CD4-positive, alpha-beta T cell (primary cell): ENCODE measurements at regions of chr14 and their contacts with region 1.

Region 1: DNA sequence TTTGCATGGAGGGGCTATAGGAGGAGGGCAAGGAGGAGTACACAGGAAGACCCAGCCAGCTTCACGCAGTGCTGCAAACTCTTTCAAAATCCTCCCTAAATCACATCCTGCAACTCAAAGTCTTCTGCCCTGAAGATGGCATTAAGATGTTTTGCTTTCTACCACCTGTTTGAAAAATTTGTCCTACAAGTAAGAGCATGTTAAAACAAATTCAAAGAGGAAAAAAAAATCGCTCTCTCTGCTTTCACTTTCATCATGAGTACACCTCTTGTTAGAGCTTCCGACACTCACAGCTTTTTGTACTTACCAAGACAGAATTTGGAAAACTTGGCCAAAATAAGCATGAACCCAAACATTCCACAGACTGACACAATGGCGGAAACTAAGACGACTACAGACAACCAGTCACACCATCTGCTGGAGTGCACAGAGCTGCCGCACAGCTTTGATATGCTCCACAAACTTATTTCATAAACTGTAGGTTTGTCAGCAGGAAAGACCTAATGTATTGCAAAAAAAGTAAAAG is 21.3 kb downstream of the GCH1 start:
- DNase-seq: peak in 7 of 14 experiments; percentile 11 to 77 (median 45)
- ATAC-seq: peak; percentile 73
- H3K4me3 ChIP-seq: peak overlapping the region; percentile 62
- H3K4me3 Mint-ChIP-seq: peak overlapping the region; percentile 95
- H3K27ac ChIP-seq: peak overlapping the region; percentile 61 to 74
- H3K27ac Mint-ChIP-seq: peak overlapping the region; percentile 88
- H3K4me1 ChIP-seq: peaks cover 30% of the 10 kb centered on the region
- H3K4me1 Mint-ChIP-seq: peaks cover 59% of the 10 kb centered on the region
- H3K27me3 ChIP-seq: no peaks in the 10 kb centered on the region
- H3K27me3 Mint-ChIP-seq: no peaks in the 10 kb centered on the region
- CTCF ChIP-seq: no peak

Region 2: DNA sequence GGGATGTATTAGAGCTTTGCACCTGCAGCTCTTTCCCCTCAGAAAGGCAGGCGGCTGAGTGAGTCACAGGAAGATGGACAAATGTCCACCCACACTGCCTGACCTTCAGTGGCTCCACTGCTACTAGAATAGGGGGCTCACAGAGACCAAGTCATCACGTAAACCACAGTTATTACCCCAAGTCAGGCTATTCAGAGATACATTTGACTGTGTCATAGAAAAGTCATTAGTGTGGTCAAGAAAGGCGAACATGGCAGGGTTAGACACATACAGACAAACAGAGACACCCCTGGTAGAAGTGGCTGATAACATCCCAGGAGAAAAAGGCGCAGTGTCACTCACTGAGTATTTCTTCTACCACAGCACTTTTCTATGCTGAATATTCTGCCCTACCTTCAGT is 14.7 kb before region 1 on chr14:
- CTCF ChIA-PET with region 1: interaction called, 3 read pairs
- POLR2A ChIA-PET with region 1: interaction called, 13 read pairs
- intact Hi-C with region 1: no loop called
- DNase-seq: no peak
- ATAC-seq: no peak
- H3K4me3 ChIP-seq: no peak overlapping the region
- H3K4me3 Mint-ChIP-seq: no peak overlapping the region
- H3K27ac ChIP-seq: no peak overlapping the region
- H3K27ac Mint-ChIP-seq: no peak overlapping the region
- H3K4me1 ChIP-seq: peaks cover 9% of the 10 kb centered on the region
- H3K4me1 Mint-ChIP-seq: peaks cover 29% of the 10 kb centered on the region
- H3K27me3 ChIP-seq: no peaks in the 10 kb centered on the region
- H3K27me3 Mint-ChIP-seq: no peaks in the 10 kb centered on the region
- CTCF ChIP-seq: no peak

Region 3: GRCh38 chr14:54893151-54893760 is 12.0 kb after region 1 on chr14:
- CTCF ChIA-PET with region 1: interaction called, 3 read pairs
- POLR2A ChIA-PET with region 1: interaction called, 12 read pairs
- intact Hi-C with region 1: no loop called
- DNase-seq: peak in 5 of 14 experiments; percentile 9 to 76 (median 47)
- ATAC-seq: peak; percentile 81
- H3K4me3 ChIP-seq: no peak overlapping the region
- H3K4me3 Mint-ChIP-seq: no peak overlapping the region
- H3K27ac ChIP-seq: no peak overlapping the region
- H3K27ac Mint-ChIP-seq: no peak overlapping the region
- H3K4me1 ChIP-seq: peaks cover 16% of the 10 kb centered on the region
- H3K4me1 Mint-ChIP-seq: peaks cover 54% of the 10 kb centered on the region
- H3K27me3 ChIP-seq: no peaks in the 10 kb centered on the region
- H3K27me3 Mint-ChIP-seq: no peaks in the 10 kb centered on the region
- CTCF ChIP-seq: peak; percentile 81

Region 4: DNA sequence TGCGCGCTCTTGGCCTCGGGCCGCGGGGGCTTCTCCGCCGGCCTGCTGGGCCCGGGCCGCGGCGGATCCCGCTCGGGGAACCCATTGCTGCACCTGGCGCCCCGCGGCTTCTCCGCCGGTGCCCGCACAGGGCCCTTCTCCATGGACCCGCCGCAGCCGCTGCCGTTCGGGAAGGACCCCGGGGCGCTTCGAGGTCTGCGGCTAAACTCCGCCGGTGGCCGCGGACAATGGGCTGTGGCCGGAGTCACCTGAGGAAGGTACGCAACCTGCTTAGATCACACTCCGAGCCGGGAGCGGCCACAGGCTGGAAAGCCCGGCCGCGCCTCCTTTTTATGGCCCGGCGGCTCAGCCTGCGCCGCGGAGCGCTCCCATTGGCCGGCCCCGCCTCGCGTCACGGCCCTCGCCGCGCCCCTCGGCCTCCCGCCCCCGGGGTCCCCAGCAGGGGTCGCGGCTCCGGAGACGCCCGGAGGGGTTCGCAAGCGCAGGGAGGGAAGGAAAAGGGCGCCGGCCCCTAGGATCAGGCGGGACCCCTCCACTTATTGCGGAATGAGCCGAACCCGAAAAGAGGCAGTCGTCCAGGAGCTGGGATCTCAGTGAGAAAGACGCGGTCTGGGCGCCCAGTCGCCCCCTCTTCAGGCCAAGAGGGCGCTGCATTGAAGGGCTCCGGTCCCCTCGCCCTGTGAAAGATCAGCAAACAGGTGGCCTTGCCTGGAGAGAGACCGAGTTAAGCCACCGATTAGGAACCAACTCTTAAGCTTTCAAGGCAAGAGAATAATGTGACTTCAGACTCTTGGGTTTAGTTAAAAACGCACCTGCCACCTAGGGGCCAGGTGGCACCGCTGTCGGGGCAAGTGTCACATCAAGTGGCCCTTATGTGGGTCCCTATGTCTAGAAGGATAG is 21.5 kb after region 1 on chr14 and contains the start of gene GCH1:
- CTCF ChIA-PET with region 1: interaction called, 7 read pairs
- POLR2A ChIA-PET with region 1: interaction called, 58 read pairs
- intact Hi-C with region 1: loop called in 1 of 2 experiments (anchors 1 kb)
- DNase-seq: peak; percentile 42 to 91 (median 65)
- ATAC-seq: peak; percentile 69
- H3K4me3 ChIP-seq: peak within 1 kb of the TSS; percentile 97
- H3K4me3 Mint-ChIP-seq: peak within 1 kb of the TSS; percentile 97
- H3K27ac ChIP-seq: peak within 1 kb of the TSS; percentile 92 to 95
- H3K27ac Mint-ChIP-seq: peak within 1 kb of the TSS; percentile 85
- H3K4me1 ChIP-seq: peaks cover 35% of the 10 kb centered on the region
- H3K4me1 Mint-ChIP-seq: peaks cover 24% of the 10 kb centered on the region
- H3K27me3 ChIP-seq: no peaks in the 10 kb centered on the region
- H3K27me3 Mint-ChIP-seq: no peaks in the 10 kb centered on the region
- CTCF ChIP-seq: peak; percentile 80
- total RNA-seq, gene GCH1: 18.4 to 20.4 TPM